ENCODE measurements at regions of chr20 and their contacts with region 1.

Region 1: GRCh38 chr20:22312744-22313346 is 271.5 kb downstream of the FOXA2 start:
- DNase-seq: peak; percentile 51
- H3K4me3 ChIP-seq: no peak overlapping the region
- H3K27ac ChIP-seq: no peak overlapping the region
- H3K4me1 ChIP-seq: no peaks in the 10 kb centered on the region
- H3K27me3 ChIP-seq: peaks cover 3% of the 10 kb centered on the region
- CTCF ChIP-seq: peak; percentile 66 to 72

Region 2: GRCh38 chr20:21702553-21703470 is 610.0 kb before region 1 on chr20:
- CTCF ChIA-PET with region 1: no interaction called
- dilution Hi-C with region 1: no loop called
- in situ Hi-C with region 1: loop called (anchors 10 kb)
- intact Hi-C with region 1: loop called (anchors 5 kb)
- DNase-seq: peak; percentile 40
- H3K4me3 ChIP-seq: peak overlapping the region in 2 of 3 experiments; percentile 15 to 18
- H3K27ac ChIP-seq: no peak overlapping the region
- H3K4me1 ChIP-seq: peaks cover 4% of the 10 kb centered on the region
- H3K27me3 ChIP-seq: peaks cover 61% of the 10 kb centered on the region
- CTCF ChIP-seq: peak; percentile 60 to 64

Region 3: GRCh38 chr20:21808863-21809664 is 503.8 kb before region 1 on chr20:
- CTCF ChIA-PET with region 1: no interaction called
- dilution Hi-C with region 1: no loop called
- in situ Hi-C with region 1: no loop called
- intact Hi-C with region 1: loop called (anchors 10 kb)
- DNase-seq: no peak
- H3K4me3 ChIP-seq: no peak overlapping the region
- H3K27ac ChIP-seq: no peak overlapping the region
- H3K4me1 ChIP-seq: no peaks in the 10 kb centered on the region
- H3K27me3 ChIP-seq: no peaks in the 10 kb centered on the region
- CTCF ChIP-seq: peak in 1 of 2 donors; percentile 22

Region 4: DNA sequence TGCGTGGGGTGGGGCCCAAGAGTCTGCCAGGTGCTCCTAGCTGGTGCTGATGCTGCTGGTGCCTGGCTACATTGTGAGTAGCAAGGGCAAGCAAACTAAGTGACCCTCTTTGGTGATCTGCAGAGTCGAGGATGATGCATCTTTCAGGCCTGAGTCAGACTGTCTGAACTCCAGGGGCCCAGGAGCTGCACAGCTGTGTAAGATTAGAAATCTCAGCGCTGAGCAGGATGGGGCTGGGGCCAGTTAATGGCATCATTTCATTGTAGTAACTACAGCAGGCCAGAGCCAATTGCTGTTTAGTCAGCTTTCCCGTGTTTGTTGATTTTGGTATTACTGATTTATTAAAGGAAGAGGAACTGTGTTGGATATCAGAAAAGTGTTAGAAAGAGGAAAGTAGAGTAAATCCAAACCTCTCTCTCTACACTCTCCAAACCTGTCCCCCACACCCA is 242.2 kb before region 1 on chr20:
- CTCF ChIA-PET with region 1: no interaction called
- dilution Hi-C with region 1: no loop called
- in situ Hi-C with region 1: no loop called
- intact Hi-C with region 1: no loop called
- DNase-seq: no peak
- H3K4me3 ChIP-seq: no peak overlapping the region
- H3K27ac ChIP-seq: no peak overlapping the region
- H3K4me1 ChIP-seq: no peaks in the 10 kb centered on the region
- H3K27me3 ChIP-seq: no peaks in the 10 kb centered on the region
- CTCF ChIP-seq: no peak

Region 5: GRCh38 chr20:22296073-22296472 is 16.8 kb before region 1 on chr20:
- CTCF ChIA-PET with region 1: interaction called, 15 read pairs
- dilution Hi-C with region 1: no loop called
- in situ Hi-C with region 1: no loop called
- intact Hi-C with region 1: no loop called
- DNase-seq: no peak
- H3K4me3 ChIP-seq: no peak overlapping the region
- H3K27ac ChIP-seq: no peak overlapping the region
- H3K4me1 ChIP-seq: peaks cover 9% of the 10 kb centered on the region
- H3K27me3 ChIP-seq: no peaks in the 10 kb centered on the region
- CTCF ChIP-seq: no peak

Region 6: DNA sequence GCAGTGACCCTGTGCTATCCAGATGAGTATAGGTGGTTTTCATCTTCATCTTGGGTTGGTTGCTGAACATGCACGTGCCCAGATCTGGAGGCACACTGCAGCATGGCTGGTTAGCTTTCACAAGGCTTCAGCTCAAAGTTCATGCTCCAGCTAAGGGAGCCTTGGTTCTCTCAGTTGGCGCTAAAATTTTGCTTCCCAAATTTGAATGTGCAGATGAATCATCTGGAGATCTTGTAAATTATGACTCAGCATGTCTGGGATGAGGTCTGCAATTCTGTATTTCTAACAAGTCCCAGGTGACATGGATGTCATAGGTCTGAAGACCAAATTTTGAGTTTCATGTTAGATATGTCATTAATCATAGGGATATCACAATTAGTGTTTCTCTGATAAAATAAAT is 40.7 kb after region 1 on chr20:
- CTCF ChIA-PET with region 1: no interaction called
- dilution Hi-C with region 1: no loop called
- in situ Hi-C with region 1: no loop called
- intact Hi-C with region 1: no loop called
- DNase-seq: peak; percentile 33
- H3K4me3 ChIP-seq: no peak overlapping the region
- H3K27ac ChIP-seq: no peak overlapping the region
- H3K4me1 ChIP-seq: no peaks in the 10 kb centered on the region
- H3K27me3 ChIP-seq: no peaks in the 10 kb centered on the region
- CTCF ChIP-seq: no peak

Measured in mammary epithelial cell (primary cell).